Activated CD4-positive, alpha-beta T cell treated with anti-CD3 and anti-CD28 coated beads, Interleukin-2, amount 10 ng/mL, durations not matched to agents 24 days and 14 days (primary cell): ENCODE measurements at regions of chr18 and their contacts with region 1.

Region 1: DNA sequence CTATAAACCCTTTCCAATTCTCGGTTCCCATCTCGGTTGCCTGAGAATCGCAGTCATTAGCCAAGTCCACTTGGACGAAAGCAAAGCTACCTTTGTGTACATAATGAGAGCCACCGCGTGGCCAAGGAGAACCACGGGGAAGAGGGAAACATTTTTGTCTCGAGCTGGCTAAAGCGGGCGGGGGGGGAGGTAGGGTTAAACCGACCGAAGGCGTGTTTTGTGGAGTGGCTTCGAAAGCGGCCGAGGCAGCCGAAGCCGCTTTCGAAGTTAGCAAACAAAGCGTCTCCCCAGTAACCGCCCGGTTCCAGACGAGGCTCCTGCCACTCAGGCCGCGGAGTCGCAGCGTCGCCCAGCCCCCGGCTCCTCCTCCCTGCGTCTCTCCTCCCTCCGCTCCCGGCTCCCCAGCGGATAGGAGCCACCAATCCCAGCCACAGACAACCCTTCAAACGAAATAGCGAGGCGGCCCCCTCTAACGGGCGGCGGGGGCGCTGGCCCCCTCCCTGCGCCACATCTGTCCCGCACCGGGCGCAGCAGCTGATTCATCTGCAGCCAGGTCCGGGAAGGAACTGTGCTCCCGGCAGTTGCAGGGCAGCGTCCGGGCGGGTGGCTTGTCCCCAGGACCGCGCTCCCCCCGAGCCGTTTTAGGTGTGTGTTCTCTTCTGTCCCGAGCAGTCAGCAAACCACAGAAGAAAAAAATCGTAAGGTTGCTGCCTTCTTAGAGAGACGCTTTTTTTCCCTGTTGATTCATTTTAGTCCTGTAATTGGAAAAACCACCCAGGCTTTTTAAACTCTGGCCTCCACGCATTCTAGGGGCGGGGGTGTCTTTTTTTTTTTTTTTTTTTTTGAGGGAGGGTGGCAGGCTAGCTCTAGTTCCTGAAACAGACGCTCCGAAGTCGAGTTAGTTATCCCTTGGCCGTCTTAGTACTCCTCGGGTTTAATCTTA is 1.8 kb upstream of the TGIF1 start:
- DNase-seq: peak; percentile 96
- H3K4me3 Mint-ChIP-seq: peak overlapping the region; percentile 96
- H3K27ac Mint-ChIP-seq: peak overlapping the region; percentile 99
- H3K4me1 Mint-ChIP-seq: peaks cover 35% of the 10 kb centered on the region
- H3K27me3 Mint-ChIP-seq: no peaks in the 10 kb centered on the region

Region 2: DNA sequence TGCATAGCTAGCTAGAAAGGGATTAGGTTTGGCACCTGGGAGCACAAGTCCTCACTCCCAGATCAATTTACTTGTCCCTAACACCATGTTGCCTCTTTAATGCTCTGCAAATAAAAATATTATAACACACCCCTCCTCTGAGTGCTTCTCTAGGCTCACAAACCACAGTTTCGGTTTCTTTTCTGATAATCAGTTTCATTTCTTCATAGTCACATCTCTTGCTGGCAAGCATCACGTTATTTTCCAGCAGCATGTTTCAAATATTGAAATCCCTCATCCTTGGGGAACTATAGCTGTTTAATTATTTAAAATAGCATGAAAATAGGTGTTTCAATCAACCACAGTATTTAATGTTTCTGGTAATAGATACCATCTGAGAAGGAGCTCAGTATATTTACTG is 806.5 kb before region 1 on chr18:
- intact Hi-C with region 1: loop called (anchors 5 kb)
- DNase-seq: peak; percentile 75
- H3K4me3 Mint-ChIP-seq: peak overlapping the region; percentile 70
- H3K27ac Mint-ChIP-seq: peak overlapping the region; percentile 87
- H3K4me1 Mint-ChIP-seq: peaks cover 43% of the 10 kb centered on the region
- H3K27me3 Mint-ChIP-seq: no peaks in the 10 kb centered on the region

Region 3: DNA sequence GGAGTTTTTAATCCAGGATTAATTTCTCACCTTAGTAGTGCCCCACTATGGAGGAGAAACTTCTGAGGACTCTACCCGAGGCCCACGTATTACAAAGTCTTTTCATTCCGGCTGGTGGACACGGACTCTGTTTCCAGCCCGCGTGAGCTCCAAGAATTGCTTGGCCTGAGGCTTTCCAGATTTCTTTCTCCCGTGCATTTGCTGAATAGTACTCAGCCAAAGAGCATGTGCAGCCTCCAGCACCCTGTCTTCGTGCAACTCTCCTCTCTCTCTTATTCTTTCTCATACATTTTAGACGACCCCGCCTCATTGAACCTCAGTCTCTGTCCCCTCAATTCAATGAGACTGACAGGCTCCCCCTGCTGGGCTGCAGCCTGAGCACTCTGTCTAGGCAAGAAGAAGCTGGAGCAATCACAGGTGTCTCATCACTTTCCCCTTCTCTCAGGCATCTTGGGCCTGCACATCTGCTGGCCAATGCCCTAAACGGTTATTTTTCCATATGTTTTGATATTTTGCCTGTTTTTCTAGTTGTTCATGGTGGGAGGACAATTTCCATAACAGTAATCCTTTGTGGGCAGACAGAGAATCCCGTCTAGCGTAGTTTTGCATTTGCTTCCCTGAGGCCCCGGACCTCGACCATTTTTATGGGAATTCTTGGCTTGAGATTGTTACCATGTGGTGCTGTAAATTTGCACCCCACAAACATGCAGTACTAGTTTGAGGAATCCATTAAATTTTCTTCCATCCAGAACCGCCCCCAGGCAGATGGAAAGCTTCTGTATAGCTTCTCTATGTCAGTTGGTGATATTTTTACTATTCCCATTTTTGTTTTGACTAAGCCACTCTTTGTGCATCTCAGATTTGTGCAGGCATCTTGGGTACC is 385.1 kb before region 1 on chr18:
- intact Hi-C with region 1: loop called (anchors 2 kb)
- DNase-seq: peak; percentile 93
- H3K4me3 Mint-ChIP-seq: peak overlapping the region; percentile 62
- H3K27ac Mint-ChIP-seq: peak overlapping the region; percentile 79
- H3K4me1 Mint-ChIP-seq: peaks cover 66% of the 10 kb centered on the region
- H3K27me3 Mint-ChIP-seq: no peaks in the 10 kb centered on the region

Region 4: DNA sequence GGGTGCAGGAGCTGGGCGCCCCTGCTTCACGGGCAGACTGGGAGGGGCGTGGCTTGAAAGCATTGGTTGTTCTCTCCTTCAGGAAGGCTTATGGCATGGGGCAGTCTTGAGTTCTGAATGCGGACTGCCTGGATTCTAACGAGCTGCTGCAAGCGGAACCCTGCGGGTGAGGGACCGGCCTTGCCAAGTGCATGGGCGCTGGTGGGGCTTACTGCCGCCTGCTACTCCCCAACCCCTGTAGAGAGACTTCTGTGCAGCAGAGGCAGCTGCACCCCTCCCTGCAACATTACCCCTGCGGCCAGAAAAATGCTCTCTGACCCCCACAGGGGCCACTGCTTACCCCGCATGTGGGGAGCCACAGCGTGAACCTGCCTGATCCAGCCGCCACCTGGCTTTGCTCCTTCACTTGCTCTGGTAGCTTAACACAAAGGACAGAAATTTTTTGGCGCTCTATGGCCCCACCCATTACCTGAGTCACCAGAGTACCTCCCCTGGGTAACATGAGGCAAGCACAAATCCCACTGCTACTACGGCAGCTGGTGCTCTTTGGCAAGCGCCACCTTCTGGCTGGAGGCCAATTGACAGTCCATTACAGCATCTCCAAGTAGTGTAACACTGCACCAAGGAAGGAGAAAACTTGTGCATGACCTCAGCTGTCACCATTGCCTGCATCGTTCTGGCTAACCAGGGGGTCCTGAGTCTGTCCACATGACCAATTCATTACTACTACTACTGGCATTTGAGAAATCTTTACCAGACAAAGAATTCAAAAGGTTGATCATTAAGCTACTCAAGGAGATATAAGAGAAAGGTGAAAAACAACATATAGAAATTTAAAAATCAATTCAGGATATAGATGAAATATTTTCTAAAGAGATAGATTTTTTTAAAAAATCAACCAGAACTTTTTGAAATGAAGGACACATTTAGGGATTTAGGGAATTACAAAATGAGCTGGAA is 150.9 kb before region 1 on chr18:
- intact Hi-C with region 1: loop called (anchors 1 kb)
- DNase-seq: peak; percentile 98
- H3K4me3 Mint-ChIP-seq: peak overlapping the region; percentile 93
- H3K27ac Mint-ChIP-seq: peak overlapping the region; percentile 82
- H3K4me1 Mint-ChIP-seq: peaks cover 11% of the 10 kb centered on the region
- H3K27me3 Mint-ChIP-seq: peaks cover 32% of the 10 kb centered on the region

Region 5: GRCh38 chr18:3420919-3421279 is 27.3 kb before region 1 on chr18:
- intact Hi-C with region 1: no loop called
- DNase-seq: no peak
- H3K4me3 Mint-ChIP-seq: no peak overlapping the region
- H3K27ac Mint-ChIP-seq: no peak overlapping the region
- H3K4me1 Mint-ChIP-seq: no peaks in the 10 kb centered on the region
- H3K27me3 Mint-ChIP-seq: no peaks in the 10 kb centered on the region

Region 6: GRCh38 chr18:3604498-3605408 is 156.6 kb after region 1 on chr18:
- intact Hi-C with region 1: loop called (anchors 1 kb)
- DNase-seq: peak; percentile 82
- H3K4me3 Mint-ChIP-seq: no peak overlapping the region
- H3K27ac Mint-ChIP-seq: no peak overlapping the region
- H3K4me1 Mint-ChIP-seq: peaks cover 20% of the 10 kb centered on the region
- H3K27me3 Mint-ChIP-seq: no peaks in the 10 kb centered on the region

Region 7: GRCh38 chr18:5295981-5296705 is 1848.0 kb after region 1 on chr18:
- intact Hi-C with region 1: loop called (anchors 5 kb)
- DNase-seq: peak; percentile 97
- H3K4me3 Mint-ChIP-seq: peak overlapping the region; percentile 95
- H3K27ac Mint-ChIP-seq: peak overlapping the region; percentile 98
- H3K4me1 Mint-ChIP-seq: peaks cover 34% of the 10 kb centered on the region
- H3K27me3 Mint-ChIP-seq: peaks cover 17% of the 10 kb centered on the region